ENCODE measurements at regions of chr13 and their contacts with region 1.

Region 1: DNA sequence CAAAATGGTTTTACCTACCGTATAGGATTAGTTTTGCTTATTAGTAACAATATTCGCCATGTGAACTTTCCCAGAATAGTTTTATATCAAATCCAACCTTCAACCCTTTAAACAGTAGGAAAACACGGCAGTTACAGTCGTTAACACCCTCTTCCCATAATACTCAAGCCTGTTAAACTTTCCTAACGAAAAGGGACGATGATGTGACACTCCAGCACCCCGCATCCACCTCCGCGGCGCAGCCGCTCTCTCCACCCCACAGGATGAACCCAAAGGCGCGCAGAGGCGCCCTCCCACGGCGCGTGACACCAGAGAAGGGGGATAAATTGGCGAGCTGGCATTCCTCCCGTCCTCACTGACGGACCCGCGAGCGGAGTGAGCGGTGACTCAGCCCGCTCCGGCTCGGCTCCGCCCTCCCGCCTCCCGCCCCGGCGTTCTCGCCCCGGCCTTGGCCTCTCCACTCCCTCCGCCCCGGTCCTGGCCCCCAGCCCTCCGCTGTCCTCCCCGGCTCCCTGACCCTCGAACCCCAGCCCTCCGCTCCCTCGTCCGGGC is 665 bp downstream of the TUBGCP3 start:
- DNase-seq: peak; percentile 59
- H3K4me3 Mint-ChIP-seq: peak overlapping the region; percentile 96
- H3K27ac Mint-ChIP-seq: peak overlapping the region; percentile 93
- H3K4me1 Mint-ChIP-seq: peaks cover 36% of the 10 kb centered on the region
- H3K27me3 Mint-ChIP-seq: no peaks in the 10 kb centered on the region

Region 2: DNA sequence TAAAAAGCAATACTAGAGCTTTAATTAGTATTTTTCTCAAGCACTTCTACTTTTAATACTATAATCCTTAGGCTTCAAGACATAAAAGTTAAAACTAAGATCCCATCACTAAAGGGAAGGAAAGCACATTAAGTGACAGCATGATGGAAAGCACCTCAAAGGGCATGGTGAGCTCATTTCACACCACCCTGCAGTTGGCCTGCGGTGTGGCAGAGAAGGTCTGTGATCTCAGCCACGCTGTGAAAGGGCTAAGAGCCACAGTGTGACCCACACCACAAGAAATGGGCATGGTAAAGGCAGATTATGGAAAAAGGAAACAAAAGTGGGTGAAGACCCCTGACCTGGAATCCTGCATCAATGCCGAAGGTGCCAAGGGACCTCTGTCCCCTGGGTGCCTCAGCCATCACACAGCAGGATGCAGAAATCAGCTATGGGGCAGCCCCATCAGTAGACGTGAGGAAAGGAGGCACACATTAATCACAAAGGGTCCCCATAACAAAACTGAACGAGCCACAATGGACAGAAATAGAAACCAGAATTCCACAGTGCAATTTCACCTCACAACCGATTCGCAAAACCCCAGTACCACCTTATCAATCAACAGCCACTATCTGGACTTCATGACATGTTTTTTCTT is 33.0 kb before region 1 on chr13:
- intact Hi-C with region 1: loop called (anchors 5 kb)
- DNase-seq: no peak
- H3K4me3 Mint-ChIP-seq: no peak overlapping the region
- H3K27ac Mint-ChIP-seq: no peak overlapping the region
- H3K4me1 Mint-ChIP-seq: peaks cover 6% of the 10 kb centered on the region
- H3K27me3 Mint-ChIP-seq: no peaks in the 10 kb centered on the region

Region 3: GRCh38 chr13:112567161-112567862 is 20.0 kb before region 1 on chr13:
- intact Hi-C with region 1: loop called (anchors 2 kb)
- DNase-seq: no peak
- H3K4me3 Mint-ChIP-seq: no peak overlapping the region
- H3K27ac Mint-ChIP-seq: no peak overlapping the region
- H3K4me1 Mint-ChIP-seq: peaks cover 21% of the 10 kb centered on the region
- H3K27me3 Mint-ChIP-seq: no peaks in the 10 kb centered on the region

Region 4: GRCh38 chr13:112606109-112607001 is 19.1 kb after region 1 on chr13:
- intact Hi-C with region 1: loop called (anchors 1 kb)
- DNase-seq: peak; percentile 86
- H3K4me3 Mint-ChIP-seq: peak overlapping the region; percentile 84
- H3K27ac Mint-ChIP-seq: no peak overlapping the region
- H3K4me1 Mint-ChIP-seq: peaks cover 8% of the 10 kb centered on the region
- H3K27me3 Mint-ChIP-seq: peaks cover 28% of the 10 kb centered on the region

Region 5: GRCh38 chr13:112616586-112617362 is 29.5 kb after region 1 on chr13:
- intact Hi-C with region 1: no loop called
- DNase-seq: no peak
- H3K4me3 Mint-ChIP-seq: no peak overlapping the region
- H3K27ac Mint-ChIP-seq: no peak overlapping the region
- H3K4me1 Mint-ChIP-seq: no peaks in the 10 kb centered on the region
- H3K27me3 Mint-ChIP-seq: peaks cover 7% of the 10 kb centered on the region

Region 6: GRCh38 chr13:112689303-112690165 is 102.2 kb after region 1 on chr13 and contains the start of gene ATP11A:
- intact Hi-C with region 1: loop called (anchors 1 kb)
- DNase-seq: peak; percentile 81
- H3K4me3 Mint-ChIP-seq: peak within 1 kb of the TSS; percentile 84
- H3K27ac Mint-ChIP-seq: peak within 1 kb of the TSS; percentile 94
- H3K4me1 Mint-ChIP-seq: peaks cover 59% of the 10 kb centered on the region
- H3K27me3 Mint-ChIP-seq: no peaks in the 10 kb centered on the region
- total RNA-seq, gene ATP11A: 90.4 and 97.8 TPM in 2 replicates

Region 7: GRCh38 chr13:113296842-113297369 is 709.6 kb after region 1 on chr13 and contains the start of gene LAMP1:
- intact Hi-C with region 1: loop called (anchors 5 kb)
- DNase-seq: peak; percentile 98
- H3K4me3 Mint-ChIP-seq: peak within 1 kb of the TSS; percentile 97
- H3K27ac Mint-ChIP-seq: peak within 1 kb of the TSS; percentile 98
- H3K4me1 Mint-ChIP-seq: peaks cover 20% of the 10 kb centered on the region
- H3K27me3 Mint-ChIP-seq: peaks cover 27% of the 10 kb centered on the region
- total RNA-seq, gene LAMP1: 59.4 and 60.3 TPM in 2 replicates